AG04449 (cell line): ENCODE measurements at regions of chr7 and their contacts with region 1.

Region 1: DNA sequence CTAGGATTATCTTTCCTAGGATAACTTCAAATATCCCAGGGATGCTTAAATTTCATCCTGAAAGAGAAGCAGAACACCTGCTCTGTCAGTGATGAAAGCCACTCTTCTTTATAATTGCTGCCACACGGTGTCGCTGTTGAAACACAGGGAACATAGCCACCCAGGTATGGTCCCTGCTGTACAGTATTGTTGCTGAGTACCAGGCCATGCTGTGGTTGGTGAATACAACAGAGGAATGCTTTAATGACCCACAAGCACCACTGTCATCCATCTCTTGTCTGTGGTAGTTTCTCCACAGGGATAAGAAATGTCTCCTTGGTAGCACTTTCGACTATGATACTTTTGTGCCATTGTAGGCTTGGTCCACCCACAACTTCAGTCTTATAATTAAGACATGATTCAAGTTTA is 70.6 kb upstream of the STARD3NL start:
- DNase-seq: no peak
- H3K4me3 ChIP-seq: no peak overlapping the region
- CTCF ChIP-seq: peak; percentile 67

Region 2: DNA sequence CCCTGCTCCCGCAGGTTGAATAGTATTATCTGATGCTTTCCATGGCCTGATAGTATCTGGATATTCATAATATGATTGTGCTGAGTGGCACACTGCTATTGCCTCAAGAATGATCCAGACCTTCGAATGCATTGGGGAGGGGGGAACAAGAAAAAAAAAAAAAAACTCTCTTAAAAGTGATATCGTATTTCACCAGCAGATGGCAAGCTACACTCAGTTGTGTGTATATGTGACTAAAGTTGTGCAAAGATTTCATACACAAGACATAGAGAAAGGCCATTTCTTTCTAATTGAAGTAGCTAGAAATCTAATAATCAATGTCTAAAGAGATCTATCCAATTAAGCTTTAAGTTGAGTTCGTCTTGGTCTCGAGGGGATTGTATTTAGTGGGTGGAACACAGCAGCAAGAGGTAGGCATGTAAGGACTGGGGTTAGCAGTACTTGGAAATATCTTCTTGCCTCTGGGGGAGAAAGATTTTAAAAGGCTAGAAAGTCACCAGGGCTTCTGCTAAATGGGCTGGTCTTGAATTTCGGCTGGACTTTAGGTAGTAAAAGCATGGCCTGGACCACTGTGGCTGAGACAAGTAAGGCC is 206.2 kb before region 1 on chr7:
- CTCF ChIA-PET with region 1: interaction called, 14 read pairs
- POLR2A ChIA-PET with region 1: no interaction called
- DNase-seq: no peak
- H3K4me3 ChIP-seq: no peak overlapping the region
- CTCF ChIP-seq: peak; percentile 42

Region 3: DNA sequence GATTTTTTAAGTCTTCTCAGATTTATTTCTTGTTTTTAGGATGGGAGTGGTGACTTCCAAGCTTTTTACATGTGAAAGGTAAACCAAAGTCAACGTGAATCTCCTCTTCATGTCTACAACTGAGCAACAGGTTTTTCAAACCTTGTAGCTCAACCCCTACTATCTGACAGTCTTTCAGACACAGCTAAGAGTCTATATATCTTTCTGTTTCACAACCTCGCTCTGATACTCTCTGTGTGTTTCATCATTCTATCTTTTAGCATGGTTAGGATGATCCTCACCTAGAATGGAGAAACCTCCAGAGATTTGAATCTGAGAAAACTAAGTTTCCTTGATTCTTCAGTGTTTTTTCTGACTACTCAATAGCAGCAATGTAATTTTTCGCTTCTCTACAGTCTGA is 90.9 kb before region 1 on chr7:
- CTCF ChIA-PET with region 1: no interaction called
- POLR2A ChIA-PET with region 1: no interaction called
- DNase-seq: no peak
- H3K4me3 ChIP-seq: no peak overlapping the region
- CTCF ChIP-seq: no peak

Region 4: GRCh38 chr7:38086857-38087256 is 20.6 kb before region 1 on chr7:
- CTCF ChIA-PET with region 1: interaction called, 14 read pairs
- POLR2A ChIA-PET with region 1: no interaction called
- DNase-seq: no peak
- H3K4me3 ChIP-seq: no peak overlapping the region
- CTCF ChIP-seq: no peak

Region 5: GRCh38 chr7:38122501-38122900 is 15.0 kb after region 1 on chr7:
- CTCF ChIA-PET with region 1: interaction called, 12 read pairs
- POLR2A ChIA-PET with region 1: no interaction called
- DNase-seq: no peak
- H3K4me3 ChIP-seq: no peak overlapping the region
- CTCF ChIP-seq: no peak

Region 6: DNA sequence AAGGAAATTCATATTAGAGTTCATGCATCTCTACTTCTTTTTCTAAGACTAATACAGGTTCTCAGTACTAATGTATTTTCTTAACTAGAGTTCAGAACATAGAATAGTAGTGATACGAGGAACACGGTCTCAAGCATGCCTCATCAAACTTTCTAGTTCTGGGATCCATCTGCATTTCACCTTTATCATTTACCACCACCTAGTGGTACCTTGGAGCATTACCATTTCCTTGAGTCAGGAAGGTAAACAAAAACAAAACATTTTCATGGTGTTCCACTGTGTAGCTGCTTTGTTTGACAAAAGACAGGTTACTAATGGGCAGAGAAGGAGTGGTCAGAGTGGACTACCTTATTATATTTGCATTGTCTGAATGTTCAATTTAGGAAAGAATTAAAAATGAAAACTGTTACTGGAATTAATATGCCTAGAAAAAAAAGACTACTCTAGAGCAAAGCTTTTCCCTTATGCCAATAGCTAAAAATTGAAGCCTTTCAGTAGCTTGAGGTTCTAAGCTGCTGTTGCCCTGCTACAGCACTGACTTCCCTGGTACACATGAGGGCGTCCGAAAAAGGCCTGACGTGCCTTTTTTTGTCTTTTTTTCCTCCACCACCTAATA is 115.1 kb after region 1 on chr7:
- CTCF ChIA-PET with region 1: interaction called, 73 read pairs
- POLR2A ChIA-PET with region 1: no interaction called
- DNase-seq: no peak
- H3K4me3 ChIP-seq: no peak overlapping the region
- CTCF ChIP-seq: peak; percentile 63

Region 7: GRCh38 chr7:38318803-38319416 is 211.4 kb after region 1 on chr7:
- CTCF ChIA-PET with region 1: interaction called, 44 read pairs
- POLR2A ChIA-PET with region 1: no interaction called
- DNase-seq: peak; percentile 53
- H3K4me3 ChIP-seq: no peak overlapping the region
- CTCF ChIP-seq: peak; percentile 74